Naive thymus-derived CD4-positive, alpha-beta T cell (primary cell): ENCODE measurements at regions of chr19 and their contacts with region 1.

Region 1: DNA sequence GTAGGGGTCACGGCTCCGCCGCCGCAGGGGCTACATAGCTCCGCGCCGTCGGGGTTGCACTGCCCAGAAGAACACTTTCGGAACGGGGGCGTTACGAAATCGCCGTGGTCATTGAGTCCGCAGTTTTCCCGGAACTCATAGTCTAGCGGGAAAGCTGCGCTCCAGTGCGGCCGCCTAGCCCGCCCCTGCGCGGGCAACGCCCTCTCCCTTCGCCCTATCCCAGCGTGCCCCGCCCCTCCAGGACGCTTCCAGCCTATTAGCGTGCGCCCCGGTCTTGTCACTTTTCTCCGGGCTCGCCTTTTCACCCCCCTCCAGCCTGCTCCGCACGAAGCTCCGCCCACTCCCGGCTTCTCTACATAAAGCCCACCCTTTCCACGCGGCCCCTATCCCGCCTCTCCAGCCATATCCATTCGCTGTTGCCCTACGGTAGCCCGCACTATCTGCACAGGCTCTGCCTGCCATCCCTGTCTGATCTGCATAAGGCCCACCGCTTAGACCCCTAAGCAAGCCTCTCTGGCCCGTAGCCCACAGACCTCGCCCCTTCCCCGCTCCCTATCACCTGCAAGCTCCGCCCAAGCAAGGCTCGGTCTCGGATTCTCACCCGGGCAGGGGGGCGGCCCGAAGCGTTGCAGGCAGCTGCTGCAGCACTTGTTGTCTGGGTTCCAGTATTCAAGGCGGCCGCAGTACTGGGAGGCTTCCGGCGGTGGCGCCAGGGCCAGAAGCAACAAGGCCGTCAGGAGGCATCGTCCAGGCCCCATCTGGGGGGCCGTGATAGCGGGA is 1.6 kb downstream of the IGFLR1 start:
- DNase-seq: peak; percentile 81 to 95 (median 92)
- ATAC-seq: peak; percentile 78
- H3K4me3 ChIP-seq: peak overlapping the region; percentile 89
- H3K4me3 Mint-ChIP-seq: peak overlapping the region; percentile 87 to 100 (median 92)
- H3K27ac ChIP-seq: peak overlapping the region; percentile 91
- H3K27ac Mint-ChIP-seq: peak overlapping the region; percentile 85 to 99 (median 96)
- H3K4me1 ChIP-seq: peaks cover 27% of the 10 kb centered on the region in 2 donors
- H3K4me1 Mint-ChIP-seq: peaks cover 25 to 67% (median 48%) of the 10 kb centered on the region in 7 donors
- H3K27me3 ChIP-seq: no peaks in the 10 kb centered on the region
- H3K27me3 Mint-ChIP-seq: peaks cover 0 to 2% (median 0%) of the 10 kb centered on the region in 5 donors

Region 2: GRCh38 chr19:35569281-35569781 is 171.3 kb before region 1 on chr19:
- CTCF ChIA-PET with region 1: no interaction called
- POLR2A ChIA-PET with region 1: no interaction called
- intact Hi-C with region 1: no loop called
- DNase-seq: no peak
- ATAC-seq: no peak
- H3K4me3 ChIP-seq: no peak overlapping the region
- H3K4me3 Mint-ChIP-seq: no peak overlapping the region
- H3K27ac ChIP-seq: no peak overlapping the region
- H3K27ac Mint-ChIP-seq: no peak overlapping the region
- H3K4me1 ChIP-seq: no peaks in the 10 kb centered on the region
- H3K4me1 Mint-ChIP-seq: peaks cover 0 to 3% (median 0%) of the 10 kb centered on the region in 7 donors
- H3K27me3 ChIP-seq: no peaks in the 10 kb centered on the region
- H3K27me3 Mint-ChIP-seq: peaks cover 5 to 27% (median 19%) of the 10 kb centered on the region in 5 donors

Region 3: GRCh38 chr19:35702223-35703012 is 38.2 kb before region 1 on chr19:
- CTCF ChIA-PET with region 1: no interaction called
- POLR2A ChIA-PET with region 1: interaction called, 13 read pairs
- intact Hi-C with region 1: loop called in 1 of 2 experiments (anchors 1 kb)
- DNase-seq: peak; percentile 66 to 96 (median 90)
- ATAC-seq: peak; percentile 100
- H3K4me3 ChIP-seq: peak overlapping the region; percentile 85
- H3K4me3 Mint-ChIP-seq: peak overlapping the region; percentile 88 to 100 (median 96)
- H3K27ac ChIP-seq: peak overlapping the region; percentile 66
- H3K27ac Mint-ChIP-seq: peak overlapping the region; percentile 79 to 98 (median 93)
- H3K4me1 ChIP-seq: no peaks in the 10 kb centered on the region
- H3K4me1 Mint-ChIP-seq: peaks cover 5 to 22% (median 6%) of the 10 kb centered on the region in 7 donors
- H3K27me3 ChIP-seq: no peaks in the 10 kb centered on the region
- H3K27me3 Mint-ChIP-seq: peaks cover 0 to 4% (median 0%) of the 10 kb centered on the region in 5 donors

Region 4: GRCh38 chr19:35722897-35723296 is 17.7 kb before region 1 on chr19:
- CTCF ChIA-PET with region 1: interaction called, 5 read pairs
- POLR2A ChIA-PET with region 1: interaction called, 20 read pairs
- intact Hi-C with region 1: loop called in 1 of 2 experiments (anchors 1 kb)
- DNase-seq: no peak
- ATAC-seq: no peak
- H3K4me3 ChIP-seq: no peak overlapping the region
- H3K4me3 Mint-ChIP-seq: no peak overlapping the region
- H3K27ac ChIP-seq: no peak overlapping the region
- H3K27ac Mint-ChIP-seq: no peak overlapping the region
- H3K4me1 ChIP-seq: peaks cover 10 to 13% of the 10 kb centered on the region in 2 donors
- H3K4me1 Mint-ChIP-seq: peaks cover 8 to 34% (median 18%) of the 10 kb centered on the region in 7 donors
- H3K27me3 ChIP-seq: no peaks in the 10 kb centered on the region
- H3K27me3 Mint-ChIP-seq: no peaks in the 10 kb centered on the region

Region 5: GRCh38 chr19:35757749-35758608 is 17.4 kb after region 1 on chr19 and contains the start of gene PROSER3:
- CTCF ChIA-PET with region 1: no interaction called
- POLR2A ChIA-PET with region 1: interaction called, 18 read pairs
- intact Hi-C with region 1: loop called in 1 of 2 experiments (anchors 1 kb)
- DNase-seq: peak; percentile 93 to 100 (median 99)
- ATAC-seq: peak; percentile 98
- H3K4me3 ChIP-seq: peak within 1 kb of the TSS; percentile 99
- H3K4me3 Mint-ChIP-seq: peak within 1 kb of the TSS; percentile 92 to 100 (median 96)
- H3K27ac ChIP-seq: peak within 1 kb of the TSS; percentile 92
- H3K27ac Mint-ChIP-seq: peak within 1 kb of the TSS; percentile 89 to 99 (median 95)
- H3K4me1 ChIP-seq: peaks cover 10 to 35% of the 10 kb centered on the region in 2 donors
- H3K4me1 Mint-ChIP-seq: peaks cover 13 to 42% (median 37%) of the 10 kb centered on the region in 7 donors
- H3K27me3 ChIP-seq: peaks cover 0 to 4% of the 10 kb centered on the region in 2 donors
- H3K27me3 Mint-ChIP-seq: peaks cover 0 to 12% (median 5%) of the 10 kb centered on the region in 5 donors
- total RNA-seq, gene PROSER3: 34.0 to 47.3 (median 39.7) TPM

Region 6: DNA sequence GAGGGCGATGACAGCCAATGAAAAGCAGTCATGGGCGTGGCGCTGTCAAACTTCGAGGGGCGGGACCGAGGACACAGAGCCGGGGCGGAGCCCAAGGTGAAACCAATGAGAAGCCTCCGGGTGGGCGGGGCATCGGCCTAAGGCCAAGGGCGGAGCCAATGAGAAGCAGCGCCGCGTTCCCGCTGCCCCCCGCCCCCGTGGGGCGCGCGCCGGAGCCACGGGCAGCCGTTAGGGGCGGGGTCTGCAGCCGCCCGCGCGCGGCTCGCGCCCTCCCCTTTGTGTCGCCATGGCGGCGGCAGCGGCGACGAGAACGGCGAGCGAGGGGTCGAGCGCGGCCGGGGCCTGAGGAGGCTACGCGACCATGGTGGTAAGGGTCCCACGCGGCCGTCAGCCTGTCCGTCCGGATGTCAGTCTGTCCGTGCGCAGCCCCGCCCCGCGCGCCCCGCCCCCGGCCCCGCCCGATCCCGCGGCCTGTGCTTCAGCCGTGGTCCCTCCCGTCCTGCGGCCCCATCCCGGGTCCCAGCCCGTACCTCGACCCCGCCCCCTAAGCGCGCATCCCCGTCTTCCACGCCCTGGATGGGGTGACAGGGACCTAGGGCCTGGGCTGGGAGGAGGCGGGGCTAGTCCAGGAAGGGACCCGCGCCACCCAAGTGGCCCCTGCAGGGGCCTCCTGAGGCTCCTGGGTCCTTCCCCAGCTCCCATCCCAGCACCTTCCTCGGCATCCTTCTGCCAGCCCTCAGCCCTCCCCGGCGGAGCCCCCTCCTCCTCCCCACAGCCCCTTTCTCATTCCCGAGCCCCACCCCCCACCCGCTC is 34.9 kb after region 1 on chr19 and contains the start of gene ARHGAP33:
- CTCF ChIA-PET with region 1: no interaction called
- POLR2A ChIA-PET with region 1: interaction called, 3 read pairs
- intact Hi-C with region 1: loop called (anchors 1 kb)
- DNase-seq: peak; percentile 96 to 99 (median 98)
- ATAC-seq: peak; percentile 100
- H3K4me3 ChIP-seq: peak within 1 kb of the TSS; percentile 56
- H3K4me3 Mint-ChIP-seq: peak within 1 kb of the TSS; percentile 77 to 94 (median 86)
- H3K27ac ChIP-seq: peak within 1 kb of the TSS; percentile 61
- H3K27ac Mint-ChIP-seq: peak within 1 kb of the TSS in 7 of 9 donors; percentile 12 to 88 (median 84)
- H3K4me1 ChIP-seq: peaks cover 0 to 6% of the 10 kb centered on the region in 2 donors
- H3K4me1 Mint-ChIP-seq: peaks cover 11 to 28% (median 18%) of the 10 kb centered on the region in 7 donors
- H3K27me3 ChIP-seq: no peaks in the 10 kb centered on the region
- H3K27me3 Mint-ChIP-seq: no peaks in the 10 kb centered on the region
- total RNA-seq, gene ARHGAP33: 15.3 to 55.5 (median 23.4) TPM